Activated CD4-positive, alpha-beta T cell treated with anti-CD3 and anti-CD28 coated beads, Interleukin-2, amount 10 ng/mL, durations not matched to agents 24 days and 14 days (primary cell): ENCODE measurements at regions of chr4 and their contacts with region 1.

Region 1: GRCh38 chr4:145481164-145481941 is at the start of gene SMAD1:
- DNase-seq: peak; percentile 75
- H3K4me3 Mint-ChIP-seq: no peak within 1 kb of the TSS
- H3K27ac Mint-ChIP-seq: peak within 1 kb of the TSS; percentile 79
- H3K4me1 Mint-ChIP-seq: peaks cover 10% of the 10 kb centered on the region
- H3K27me3 Mint-ChIP-seq: peaks cover 38% of the 10 kb centered on the region
- total RNA-seq, gene SMAD1: 3.9 and 4.3 TPM in 2 replicates

Region 2: DNA sequence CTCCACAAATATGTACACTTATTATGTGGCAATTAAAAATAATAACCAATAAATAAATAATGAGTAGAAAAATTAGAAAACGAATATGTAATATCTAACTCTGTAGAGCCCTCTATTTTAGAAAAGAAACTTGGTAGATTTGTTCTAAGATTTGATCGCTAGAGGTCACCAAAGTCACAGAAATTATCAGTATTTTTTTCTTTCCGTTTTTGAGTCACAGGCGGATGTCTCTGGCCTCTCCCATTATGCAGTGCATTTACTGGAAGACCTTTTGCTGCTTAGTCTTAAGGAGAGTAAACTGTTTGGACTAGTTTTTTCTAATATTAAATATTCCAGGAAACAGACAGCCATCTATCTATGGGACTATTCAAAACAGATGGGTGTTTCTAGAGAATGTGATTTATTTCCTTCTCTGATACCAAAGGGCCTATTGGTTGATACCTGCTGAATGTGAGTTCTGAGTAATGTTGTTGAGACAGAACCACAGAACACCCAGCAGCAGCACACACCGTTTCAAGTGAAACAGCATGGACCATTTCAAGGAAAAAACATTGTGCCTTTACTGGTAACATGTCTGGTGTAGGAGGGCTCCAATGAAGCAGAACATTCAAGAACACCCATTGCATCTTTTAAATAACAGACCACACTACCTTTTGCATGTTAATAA is 1306.8 kb before region 1 on chr4:
- intact Hi-C with region 1: loop called (anchors 10 kb)
- DNase-seq: peak; percentile 78
- H3K4me3 Mint-ChIP-seq: peak overlapping the region; percentile 45
- H3K27ac Mint-ChIP-seq: peak overlapping the region; percentile 86
- H3K4me1 Mint-ChIP-seq: peaks cover 19% of the 10 kb centered on the region
- H3K27me3 Mint-ChIP-seq: peaks cover 10% of the 10 kb centered on the region

Region 3: GRCh38 chr4:144202081-144202480 is 1279.3 kb before region 1 on chr4:
- intact Hi-C with region 1: no loop called
- DNase-seq: no peak
- H3K4me3 Mint-ChIP-seq: no peak overlapping the region
- H3K27ac Mint-ChIP-seq: no peak overlapping the region
- H3K4me1 Mint-ChIP-seq: no peaks in the 10 kb centered on the region
- H3K27me3 Mint-ChIP-seq: no peaks in the 10 kb centered on the region

Region 4: GRCh38 chr4:145234091-145234706 is 247.2 kb before region 1 on chr4:
- intact Hi-C with region 1: loop called (anchors 5 kb)
- DNase-seq: peak; percentile 85
- H3K4me3 Mint-ChIP-seq: no peak overlapping the region
- H3K27ac Mint-ChIP-seq: no peak overlapping the region
- H3K4me1 Mint-ChIP-seq: no peaks in the 10 kb centered on the region
- H3K27me3 Mint-ChIP-seq: peaks cover 14% of the 10 kb centered on the region

Region 5: DNA sequence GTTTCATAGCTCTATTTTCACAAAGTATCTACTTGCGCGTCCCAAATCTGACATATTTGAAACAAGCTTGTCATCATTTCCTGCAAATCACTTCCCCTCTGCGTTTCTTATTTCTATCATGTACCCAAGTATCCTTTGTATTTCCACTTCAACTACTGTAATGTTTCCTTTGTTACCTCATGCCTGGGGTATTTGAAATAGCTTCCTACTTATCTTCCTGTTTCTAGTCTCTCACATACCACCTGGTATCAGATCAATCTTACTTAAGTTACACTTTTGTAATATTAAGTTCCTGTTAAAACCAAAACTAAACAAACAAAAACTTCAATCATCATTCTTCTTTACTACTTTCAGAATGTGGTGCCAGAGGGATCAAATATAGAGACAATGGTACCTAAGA is 93.3 kb before region 1 on chr4:
- intact Hi-C with region 1: no loop called
- DNase-seq: no peak
- H3K4me3 Mint-ChIP-seq: no peak overlapping the region
- H3K27ac Mint-ChIP-seq: no peak overlapping the region
- H3K4me1 Mint-ChIP-seq: no peaks in the 10 kb centered on the region
- H3K27me3 Mint-ChIP-seq: peaks cover 10% of the 10 kb centered on the region

Region 6: DNA sequence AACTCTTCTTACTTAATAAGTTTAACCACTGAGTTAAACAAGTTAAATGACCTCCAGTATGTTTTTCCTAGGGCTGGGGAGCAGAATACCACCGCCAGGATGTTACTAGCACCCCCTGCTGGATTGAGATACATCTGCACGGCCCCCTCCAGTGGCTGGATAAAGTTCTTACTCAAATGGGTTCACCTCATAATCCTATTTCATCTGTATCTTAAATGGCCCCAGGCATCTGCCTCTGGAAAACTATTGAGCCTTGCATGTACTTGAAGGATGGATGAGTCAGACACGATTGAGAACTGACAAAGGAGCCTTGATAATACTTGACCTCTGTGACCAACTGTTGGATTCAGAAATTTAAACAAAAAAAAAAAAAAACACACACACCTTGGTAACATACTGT is 76.4 kb after region 1 on chr4:
- intact Hi-C with region 1: loop called (anchors 5 kb)
- DNase-seq: peak; percentile 84
- H3K4me3 Mint-ChIP-seq: no peak overlapping the region
- H3K27ac Mint-ChIP-seq: no peak overlapping the region
- H3K4me1 Mint-ChIP-seq: no peaks in the 10 kb centered on the region
- H3K27me3 Mint-ChIP-seq: peaks cover 3% of the 10 kb centered on the region

Region 7: DNA sequence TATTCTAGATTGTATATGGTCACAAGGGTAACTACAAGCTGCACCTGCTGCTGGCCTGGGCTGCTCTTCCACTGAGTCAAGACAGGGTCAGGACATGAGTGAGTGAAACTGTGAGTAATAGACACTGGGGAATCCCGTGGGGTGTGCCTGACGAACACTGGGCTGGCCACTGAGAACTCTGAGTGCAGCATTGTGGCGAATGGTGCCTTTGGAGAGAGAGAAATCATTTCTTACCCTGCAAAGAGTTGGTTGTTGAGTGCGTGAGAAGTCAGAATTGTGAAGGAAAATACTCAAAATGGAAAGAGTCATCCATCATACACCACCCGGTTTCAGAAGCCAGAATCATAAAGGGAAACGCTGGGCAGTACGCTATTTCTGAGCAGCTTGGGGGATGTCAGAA is 651.1 kb after region 1 on chr4:
- intact Hi-C with region 1: loop called (anchors 1 kb)
- DNase-seq: peak; percentile 73
- H3K4me3 Mint-ChIP-seq: peak overlapping the region; percentile 7
- H3K27ac Mint-ChIP-seq: peak overlapping the region; percentile 55
- H3K4me1 Mint-ChIP-seq: peaks cover 11% of the 10 kb centered on the region
- H3K27me3 Mint-ChIP-seq: peaks cover 6% of the 10 kb centered on the region